ENCODE measurements at regions of chr2 and their contacts with region 1.

Region 1: DNA sequence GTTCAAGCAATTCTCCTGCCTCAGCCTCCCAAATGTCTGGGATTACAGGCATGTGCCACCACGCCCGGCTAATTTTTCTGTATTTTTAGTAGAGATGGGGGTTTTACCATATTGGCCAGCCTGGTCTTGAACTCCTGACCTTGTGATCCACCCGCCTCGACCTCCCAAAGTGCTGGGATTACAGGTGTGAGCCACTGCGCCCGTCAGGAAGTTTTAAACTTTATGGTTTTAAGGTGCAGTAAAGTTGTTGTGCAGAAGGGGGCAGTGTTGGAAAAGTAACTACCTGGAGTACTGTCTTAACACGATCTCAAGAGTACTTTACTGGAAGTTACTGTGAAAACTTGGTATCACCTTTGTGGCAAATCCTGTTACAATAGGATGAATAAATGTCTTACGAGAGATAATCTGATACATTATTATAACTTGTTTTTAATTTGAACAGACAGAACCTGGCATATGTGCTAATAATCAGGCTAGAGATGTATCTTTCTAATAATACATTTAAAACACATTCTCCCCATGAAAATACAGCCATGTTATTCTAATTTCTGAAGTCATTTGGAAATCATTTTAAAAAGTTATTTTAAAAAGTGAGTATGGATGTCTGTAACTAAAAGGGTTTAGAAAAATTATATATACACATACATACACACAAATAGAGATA is 10.8 kb downstream of the SPDYA start:
- DNase-seq: peak; percentile 80
- ATAC-seq: peak; percentile 77
- H3K4me3 ChIP-seq: no peak overlapping the region
- H3K27ac ChIP-seq: no peak overlapping the region
- H3K4me1 ChIP-seq: no peaks in the 10 kb centered on the region
- H3K27me3 ChIP-seq: no peaks in the 10 kb centered on the region
- CTCF ChIP-seq: peak; percentile 69

Region 2: GRCh38 chr2:28801726-28802487 is 19.5 kb before region 1 on chr2:
- CTCF ChIA-PET with region 1: no interaction called
- POLR2A ChIA-PET with region 1: no interaction called
- intact Hi-C with region 1: no loop called
- DNase-seq: peak; percentile 56
- ATAC-seq: peak; percentile 59
- H3K4me3 ChIP-seq: no peak overlapping the region
- H3K27ac ChIP-seq: no peak overlapping the region
- H3K4me1 ChIP-seq: peaks cover 25% of the 10 kb centered on the region
- H3K27me3 ChIP-seq: no peaks in the 10 kb centered on the region
- CTCF ChIP-seq: no peak

Region 3: DNA sequence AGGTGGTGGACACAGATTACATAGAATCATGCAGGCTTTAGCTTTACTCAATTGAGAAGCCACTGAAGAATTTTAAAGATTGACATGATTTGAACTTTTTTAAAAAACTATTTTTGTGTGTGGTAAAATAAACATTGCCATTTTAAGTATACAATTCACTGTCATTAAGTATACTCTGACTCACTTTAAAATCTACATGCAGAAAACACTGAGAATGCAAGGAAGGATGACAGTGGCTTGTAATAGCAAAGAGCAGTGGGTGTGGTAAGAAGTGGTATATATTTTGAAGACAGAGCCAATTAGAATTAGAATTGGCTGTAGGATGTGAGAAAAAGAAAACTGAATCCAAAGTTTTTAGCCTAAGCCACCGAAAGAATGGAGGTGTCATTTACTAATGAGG is 33.8 kb after region 1 on chr2:
- CTCF ChIA-PET with region 1: no interaction called
- POLR2A ChIA-PET with region 1: no interaction called
- intact Hi-C with region 1: loop called (anchors 2 kb)
- DNase-seq: peak; percentile 58
- ATAC-seq: peak; percentile 100
- H3K4me3 ChIP-seq: no peak overlapping the region
- H3K27ac ChIP-seq: peak overlapping the region; percentile 60
- H3K4me1 ChIP-seq: peaks cover 11% of the 10 kb centered on the region
- H3K27me3 ChIP-seq: no peaks in the 10 kb centered on the region
- CTCF ChIP-seq: no peak

Region 4: DNA sequence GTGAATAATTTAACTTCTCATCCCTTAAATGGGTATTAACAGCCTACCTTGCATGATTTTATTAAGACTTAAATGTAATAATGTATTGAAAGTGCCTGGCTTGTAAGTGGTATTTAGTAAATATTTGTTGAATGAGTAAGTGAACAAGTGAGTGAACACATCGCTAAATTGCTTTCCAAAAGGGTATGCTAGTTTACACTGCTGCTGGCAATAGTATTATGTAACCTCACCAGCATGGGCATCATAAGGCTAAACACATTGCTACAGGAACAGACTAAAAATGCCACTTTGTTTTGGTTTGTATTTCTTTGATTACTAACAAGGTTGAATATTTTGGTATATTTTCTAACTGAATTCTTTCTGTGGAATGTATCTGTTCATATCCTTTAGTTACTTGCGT is 82.9 kb after region 1 on chr2:
- CTCF ChIA-PET with region 1: no interaction called
- POLR2A ChIA-PET with region 1: no interaction called
- intact Hi-C with region 1: loop called (anchors 2 kb)
- DNase-seq: peak; percentile 63
- ATAC-seq: peak; percentile 93
- H3K4me3 ChIP-seq: no peak overlapping the region
- H3K27ac ChIP-seq: no peak overlapping the region
- H3K4me1 ChIP-seq: peaks cover 25% of the 10 kb centered on the region
- H3K27me3 ChIP-seq: no peaks in the 10 kb centered on the region
- CTCF ChIP-seq: no peak

Region 5: GRCh38 chr2:28952816-28953211 is 131.4 kb after region 1 on chr2:
- CTCF ChIA-PET with region 1: interaction called, 8 read pairs
- POLR2A ChIA-PET with region 1: no interaction called
- intact Hi-C with region 1: loop called (anchors 1 kb)
- DNase-seq: no peak
- ATAC-seq: peak; percentile 40
- H3K4me3 ChIP-seq: no peak overlapping the region
- H3K27ac ChIP-seq: peak overlapping the region; percentile 22
- H3K4me1 ChIP-seq: peaks cover 24% of the 10 kb centered on the region
- H3K27me3 ChIP-seq: no peaks in the 10 kb centered on the region
- CTCF ChIP-seq: peak; percentile 50; the same call in 1 of the 2 replicates

Measured in PC-3 (cell line).